Psoas muscle (tissue), 8 donors: ENCODE measurements at regions of chr1 and their contacts with region 1.

Region 1: GRCh38 chr1:228734881-228735801 is at the start of gene RHOU:
- DNase-seq: peak; percentile 80 to 87
- ATAC-seq: peak; percentile 93 to 95 (median 93)
- H3K4me3 ChIP-seq: peak within 1 kb of the TSS; percentile 91
- H3K27ac ChIP-seq: peak within 1 kb of the TSS; percentile 86
- H3K4me1 ChIP-seq: peaks cover 8% of the 10 kb centered on the region
- H3K27me3 ChIP-seq: no peaks in the 10 kb centered on the region
- CTCF ChIP-seq: peak; percentile 86
- total RNA-seq, gene RHOU: 9.7 to 90.9 (median 27.9) TPM

Region 2: DNA sequence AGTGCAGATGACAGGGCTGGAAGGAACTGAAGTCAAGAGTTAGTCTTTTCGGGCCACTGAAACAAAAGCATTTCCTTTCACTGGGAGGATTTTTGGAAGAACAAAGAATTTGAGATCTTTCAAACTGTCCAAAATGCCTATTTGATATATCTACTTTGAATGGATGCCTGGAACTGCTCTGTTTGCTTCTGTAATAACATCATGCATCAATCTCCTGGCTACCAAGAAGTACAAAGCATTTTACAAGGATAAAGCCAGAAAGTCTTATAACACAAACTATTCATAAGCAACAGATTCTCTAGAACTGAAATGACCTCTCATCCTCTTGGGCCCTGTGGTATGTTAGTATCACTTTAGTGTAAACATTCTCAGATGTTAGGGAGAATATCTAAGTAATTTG is 18.1 kb before region 1 on chr1:
- intact Hi-C with region 1: no loop called
- DNase-seq: no peak
- ATAC-seq: no peak
- H3K4me3 ChIP-seq: no peak overlapping the region
- H3K27ac ChIP-seq: no peak overlapping the region
- H3K4me1 ChIP-seq: no peaks in the 10 kb centered on the region
- H3K27me3 ChIP-seq: no peaks in the 10 kb centered on the region
- CTCF ChIP-seq: no peak

Region 3: DNA sequence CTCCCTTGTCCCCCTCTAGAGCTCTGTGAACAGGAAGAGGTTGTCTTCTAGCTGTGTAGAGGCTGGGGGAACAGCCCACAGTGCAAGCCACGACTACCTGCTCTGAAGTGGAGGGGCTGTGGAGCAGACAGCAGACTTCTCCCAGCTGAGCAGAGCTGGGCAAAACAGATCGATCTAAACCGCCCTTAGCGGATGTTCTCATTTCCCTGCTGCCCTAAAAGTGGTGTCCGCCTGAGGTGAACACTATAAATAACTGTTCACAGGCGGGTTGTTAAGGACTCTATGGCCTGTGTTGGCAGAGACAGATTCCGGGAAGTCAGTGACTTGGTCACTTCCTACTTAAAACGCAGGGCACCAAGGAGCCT is 203.4 kb after region 1 on chr1:
- intact Hi-C with region 1: loop called in 1 of 2 experiments (anchors 5 kb)
- DNase-seq: no peak
- ATAC-seq: peak; percentile 70 to 94 (median 90)
- H3K4me3 ChIP-seq: peak overlapping the region; percentile 36
- H3K27ac ChIP-seq: peak overlapping the region; percentile 77
- H3K4me1 ChIP-seq: peaks cover 16% of the 10 kb centered on the region
- H3K27me3 ChIP-seq: no peaks in the 10 kb centered on the region
- CTCF ChIP-seq: no peak

Region 4: DNA sequence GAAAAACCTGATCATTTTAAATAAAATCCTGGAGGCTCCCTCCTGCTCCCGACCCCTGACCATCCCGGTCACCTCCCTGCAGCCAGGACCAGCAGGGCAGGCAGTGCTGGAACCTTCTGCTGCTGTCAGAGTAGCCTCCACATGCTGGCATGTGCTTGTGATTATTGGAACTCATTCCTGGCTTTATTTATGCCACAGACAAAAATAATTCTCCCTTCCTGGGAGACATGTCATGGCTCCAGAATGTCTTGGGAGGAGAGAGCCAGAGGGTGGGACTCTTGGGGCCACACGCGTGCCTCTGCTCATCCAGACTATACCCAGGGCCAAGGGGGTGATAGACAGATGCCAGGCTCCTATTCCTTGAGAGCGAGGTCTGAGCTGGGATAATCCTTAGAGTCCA is 352.2 kb after region 1 on chr1:
- intact Hi-C with region 1: loop called in 1 of 2 experiments (anchors 5 kb)
- DNase-seq: no peak
- ATAC-seq: peak in 3 of 4 donors; percentile 67 to 87 (median 69)
- H3K4me3 ChIP-seq: no peak overlapping the region
- H3K27ac ChIP-seq: no peak overlapping the region
- H3K4me1 ChIP-seq: peaks cover 18% of the 10 kb centered on the region
- H3K27me3 ChIP-seq: no peaks in the 10 kb centered on the region
- CTCF ChIP-seq: no peak

Region 5: GRCh38 chr1:229156872-229157271 is 421.7 kb after region 1 on chr1:
- intact Hi-C with region 1: loop called in 1 of 2 experiments (anchors 2 kb)
- DNase-seq: no peak
- ATAC-seq: peak in 3 of 4 donors; percentile 57 to 83 (median 66)
- H3K4me3 ChIP-seq: no peak overlapping the region
- H3K27ac ChIP-seq: no peak overlapping the region
- H3K4me1 ChIP-seq: no peaks in the 10 kb centered on the region
- H3K27me3 ChIP-seq: no peaks in the 10 kb centered on the region
- CTCF ChIP-seq: peak; percentile 45

Region 6: DNA sequence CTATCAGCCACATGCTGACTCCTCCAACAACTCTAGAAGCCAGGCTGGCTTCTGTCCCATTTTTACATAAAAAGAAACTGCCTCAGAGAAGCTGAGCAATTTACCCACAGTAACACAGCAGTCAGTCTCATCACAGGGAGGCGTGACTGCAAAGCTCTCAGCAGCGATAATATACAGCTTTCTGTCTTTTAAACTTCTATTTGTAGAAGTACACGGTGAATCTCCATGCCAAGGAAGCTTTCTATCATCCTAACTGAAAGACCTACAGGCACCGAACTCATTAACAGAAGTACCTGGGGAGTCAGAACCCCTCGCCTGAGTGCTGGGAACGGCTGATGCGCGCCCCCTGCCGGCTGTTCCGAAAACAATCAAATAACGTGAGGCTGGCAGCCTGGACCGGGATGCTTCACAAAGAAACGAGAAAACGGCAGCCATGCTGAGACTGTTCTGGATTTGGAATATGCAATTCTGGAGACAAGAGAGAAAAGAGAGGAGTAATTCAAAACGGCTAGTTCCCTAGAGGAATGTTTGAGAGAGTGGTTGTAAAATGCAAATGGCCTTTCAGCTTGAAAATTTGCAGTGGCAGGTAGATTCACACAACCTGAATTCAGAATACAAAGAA is 492.3 kb after region 1 on chr1:
- intact Hi-C with region 1: loop called (anchors 2 to 5 kb)
- DNase-seq: peak; percentile 77 to 87
- ATAC-seq: peak in 3 of 4 donors; percentile 37 to 70 (median 49)
- H3K4me3 ChIP-seq: no peak overlapping the region
- H3K27ac ChIP-seq: no peak overlapping the region
- H3K4me1 ChIP-seq: peaks cover 17% of the 10 kb centered on the region
- H3K27me3 ChIP-seq: no peaks in the 10 kb centered on the region
- CTCF ChIP-seq: peak; percentile 86